ENCODE measurements at regions of chr12 and their contacts with region 1.

Region 1: DNA sequence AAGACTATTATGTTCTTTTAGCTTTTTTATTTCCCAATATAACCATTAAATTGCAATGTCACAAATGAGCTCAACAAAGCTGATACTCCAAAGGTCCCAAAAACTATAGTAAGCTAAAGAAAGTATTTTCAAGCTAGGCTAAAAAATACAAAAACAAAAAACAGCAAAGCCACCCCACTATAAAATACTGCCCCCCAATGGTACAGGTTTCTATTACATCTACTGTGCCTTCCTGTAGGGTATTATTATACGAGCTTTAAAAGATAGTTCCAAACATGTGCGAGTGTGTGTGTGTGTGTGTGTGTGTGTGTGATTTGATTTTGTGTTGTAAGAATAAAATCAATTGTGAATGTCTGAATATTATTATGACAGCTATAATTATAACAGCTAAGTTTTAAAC is 1.1 kb downstream of the IFNG start:
- DNase-seq: peak in 4 of 14 experiments; percentile 7 to 76 (median 71)
- ATAC-seq: peak; percentile 73
- H3K4me3 ChIP-seq: peak overlapping the region; percentile 38
- H3K4me3 Mint-ChIP-seq: peak overlapping the region; percentile 20
- H3K27ac ChIP-seq: no peak overlapping the region
- H3K27ac Mint-ChIP-seq: no peak overlapping the region
- H3K4me1 ChIP-seq: peaks cover 6% of the 10 kb centered on the region
- H3K4me1 Mint-ChIP-seq: peaks cover 18% of the 10 kb centered on the region
- H3K27me3 ChIP-seq: no peaks in the 10 kb centered on the region
- H3K27me3 Mint-ChIP-seq: no peaks in the 10 kb centered on the region
- CTCF ChIP-seq: peak; percentile 54

Region 2: DNA sequence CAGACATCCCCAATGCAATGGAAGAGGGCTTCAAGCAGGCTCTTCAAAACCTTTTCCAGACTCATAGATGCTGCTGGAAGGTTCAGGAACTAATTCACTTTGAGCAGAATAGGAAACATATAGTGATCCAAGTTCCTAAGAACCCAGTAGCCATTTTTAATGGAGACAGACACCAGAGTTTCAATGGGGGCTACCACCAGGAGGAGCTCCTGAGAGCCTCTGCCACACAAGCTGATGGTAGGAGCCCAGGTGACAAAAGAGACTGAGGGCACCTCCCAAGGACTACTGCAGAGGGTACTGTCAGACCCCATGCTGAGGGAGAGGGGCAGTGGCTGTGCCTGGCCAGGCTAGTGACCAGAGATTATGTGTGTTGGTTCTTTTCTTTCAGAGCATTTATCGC is 44.8 kb before region 1 on chr12:
- CTCF ChIA-PET with region 1: interaction called, 8 read pairs
- POLR2A ChIA-PET with region 1: interaction called, 4 read pairs
- intact Hi-C with region 1: loop called in 1 of 2 experiments (anchors 2 kb)
- DNase-seq: peak in 11 of 14 experiments; percentile 8 to 68 (median 26)
- ATAC-seq: peak; percentile 44
- H3K4me3 ChIP-seq: no peak overlapping the region
- H3K4me3 Mint-ChIP-seq: no peak overlapping the region
- H3K27ac ChIP-seq: no peak overlapping the region
- H3K27ac Mint-ChIP-seq: no peak overlapping the region
- H3K4me1 ChIP-seq: peaks cover 10% of the 10 kb centered on the region
- H3K4me1 Mint-ChIP-seq: peaks cover 15% of the 10 kb centered on the region
- H3K27me3 ChIP-seq: no peaks in the 10 kb centered on the region
- H3K27me3 Mint-ChIP-seq: no peaks in the 10 kb centered on the region
- CTCF ChIP-seq: peak; percentile 43

Region 3: GRCh38 chr12:68180792-68181744 is 22.6 kb after region 1 on chr12:
- CTCF ChIA-PET with region 1: interaction called, 6 read pairs
- POLR2A ChIA-PET with region 1: interaction called, 13 read pairs
- intact Hi-C with region 1: no loop called
- DNase-seq: peak in 8 of 14 experiments; percentile 9 to 81 (median 29)
- ATAC-seq: peak; percentile 95
- H3K4me3 ChIP-seq: no peak overlapping the region
- H3K4me3 Mint-ChIP-seq: peak overlapping the region; percentile 4
- H3K27ac ChIP-seq: peak overlapping the region; percentile 32 to 64
- H3K27ac Mint-ChIP-seq: peak overlapping the region; percentile 76
- H3K4me1 ChIP-seq: peaks cover 36% of the 10 kb centered on the region
- H3K4me1 Mint-ChIP-seq: peaks cover 48% of the 10 kb centered on the region
- H3K27me3 ChIP-seq: no peaks in the 10 kb centered on the region
- H3K27me3 Mint-ChIP-seq: no peaks in the 10 kb centered on the region
- CTCF ChIP-seq: no peak